OCI-LY7 (cell line): ENCODE measurements at regions of chr7 and their contacts with region 1.

Region 1: DNA sequence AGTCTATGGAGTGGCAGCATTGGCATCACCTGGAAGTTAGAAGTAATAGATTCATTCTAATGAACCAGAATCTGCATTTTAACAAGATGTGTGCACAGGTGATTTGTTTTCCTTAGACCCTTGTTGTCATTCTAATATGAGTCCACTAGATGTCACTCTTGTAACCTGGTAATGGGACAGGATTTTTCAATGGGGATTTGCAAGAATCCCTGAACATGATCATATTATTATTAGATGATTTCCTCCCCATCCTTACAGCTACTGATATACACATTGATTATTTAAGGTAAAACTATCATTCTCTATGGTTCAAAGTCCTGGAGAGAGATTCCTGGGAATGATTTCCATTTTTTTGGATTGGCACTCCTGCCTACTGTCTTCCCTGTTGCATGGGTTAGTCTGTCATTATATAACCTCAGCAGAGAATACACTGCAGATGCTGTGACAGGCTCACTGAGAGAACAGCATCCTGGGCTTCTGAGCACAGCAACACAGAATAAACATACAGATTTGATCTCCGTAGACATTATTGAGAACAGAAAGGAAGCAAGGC is 194.9 kb downstream of the SUGCT start:
- DNase-seq: peak; percentile 56
- H3K4me3 ChIP-seq: no peak overlapping the region
- H3K27ac ChIP-seq: no peak overlapping the region
- H3K4me1 ChIP-seq: no peaks in the 10 kb centered on the region
- CTCF ChIP-seq: peak; percentile 86

Region 2: GRCh38 chr7:40232242-40232893 is 97.3 kb before region 1 on chr7:
- CTCF ChIA-PET with region 1: no interaction called
- POLR2A ChIA-PET with region 1: interaction called, 3 read pairs
- intact Hi-C with region 1: loop called (anchors 2 kb)
- DNase-seq: peak; percentile 73
- H3K4me3 ChIP-seq: no peak overlapping the region
- H3K27ac ChIP-seq: no peak overlapping the region
- H3K4me1 ChIP-seq: peaks cover 10% of the 10 kb centered on the region
- CTCF ChIP-seq: peak; percentile 85

Region 3: GRCh38 chr7:40604601-40605438 is 275.1 kb after region 1 on chr7:
- CTCF ChIA-PET with region 1: no interaction called
- POLR2A ChIA-PET with region 1: no interaction called
- intact Hi-C with region 1: loop called (anchors 1 kb)
- DNase-seq: peak; percentile 41
- H3K4me3 ChIP-seq: no peak overlapping the region
- H3K27ac ChIP-seq: no peak overlapping the region
- H3K4me1 ChIP-seq: no peaks in the 10 kb centered on the region
- CTCF ChIP-seq: peak; percentile 75

Region 4: GRCh38 chr7:41705109-41705901 is 1375.6 kb after region 1 on chr7:
- CTCF ChIA-PET with region 1: no interaction called
- POLR2A ChIA-PET with region 1: no interaction called
- intact Hi-C with region 1: loop called (anchors 10 kb)
- DNase-seq: peak; percentile 65
- H3K4me3 ChIP-seq: peak overlapping the region; percentile 49
- H3K27ac ChIP-seq: no peak overlapping the region
- H3K4me1 ChIP-seq: peaks cover 5% of the 10 kb centered on the region
- CTCF ChIP-seq: peak; percentile 67

Region 5: GRCh38 chr7:41731492-41732435 is 1402.1 kb after region 1 on chr7:
- CTCF ChIA-PET with region 1: no interaction called
- POLR2A ChIA-PET with region 1: no interaction called
- intact Hi-C with region 1: loop called (anchors 5 kb)
- DNase-seq: peak; percentile 6
- H3K4me3 ChIP-seq: no peak overlapping the region
- H3K27ac ChIP-seq: no peak overlapping the region
- H3K4me1 ChIP-seq: no peaks in the 10 kb centered on the region
- CTCF ChIP-seq: peak; percentile 82